A673 (cell line): ENCODE measurements at regions of chr1 and their contacts with region 1.

Region 1: DNA sequence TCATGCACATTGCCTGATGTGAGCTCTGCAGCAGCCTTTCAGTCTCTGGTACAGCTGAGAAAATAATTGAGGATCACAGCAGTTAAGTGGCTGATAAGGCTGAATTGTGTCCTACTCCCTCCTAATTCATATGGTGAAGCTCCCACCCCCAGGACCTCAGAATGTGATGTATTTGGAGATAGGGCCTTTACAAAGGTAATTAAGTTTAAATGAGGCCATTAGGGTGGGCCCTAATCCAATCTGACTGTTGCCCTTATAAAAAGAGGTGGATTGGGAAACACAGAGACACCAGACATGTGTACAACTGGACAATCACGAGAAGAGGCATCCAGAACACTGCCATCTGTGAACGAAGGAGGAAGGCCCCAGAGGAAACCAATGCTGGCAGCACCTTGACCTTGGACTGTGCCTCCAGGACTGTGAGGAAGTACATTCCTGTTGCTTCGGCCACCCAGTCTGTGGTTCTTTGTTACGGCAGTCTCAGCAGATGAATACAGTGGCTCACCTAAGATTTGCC is 148.1 kb downstream of the TRABD2B start:
- DNase-seq: no peak
- H3K4me3 ChIP-seq: no peak overlapping the region
- H3K27ac ChIP-seq: no peak overlapping the region
- H3K4me1 ChIP-seq: no peaks in the 10 kb centered on the region
- H3K27me3 ChIP-seq: peaks cover 4% of the 10 kb centered on the region
- CTCF ChIP-seq: no peak

Region 2: DNA sequence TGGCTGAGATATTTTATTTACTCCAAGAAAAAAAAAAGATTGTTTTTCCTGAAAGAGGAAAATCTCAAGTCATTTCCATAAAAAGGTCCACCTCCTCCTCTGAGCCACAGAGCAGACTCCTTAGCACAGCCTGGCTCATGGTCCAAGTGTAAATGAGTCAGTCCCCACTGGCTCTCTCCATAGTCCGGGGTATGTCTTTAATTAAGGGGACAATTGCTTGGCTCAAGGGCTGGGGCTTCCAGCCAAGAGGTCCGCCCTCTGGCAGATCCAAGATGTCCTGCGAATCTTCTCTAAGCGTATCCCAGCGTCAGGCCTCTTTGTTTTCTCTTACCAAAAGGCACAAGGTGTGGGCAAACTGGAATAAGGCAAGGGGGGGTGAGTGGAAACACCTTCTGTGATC is 377.9 kb before region 1 on chr1:
- CTCF ChIA-PET with region 1: no interaction called
- POLR2A ChIA-PET with region 1: no interaction called
- intact Hi-C with region 1: no loop called
- DNase-seq: no peak
- H3K4me3 ChIP-seq: no peak overlapping the region
- H3K27ac ChIP-seq: no peak overlapping the region
- H3K4me1 ChIP-seq: no peaks in the 10 kb centered on the region
- H3K27me3 ChIP-seq: peaks cover 35% of the 10 kb centered on the region
- CTCF ChIP-seq: no peak

Region 3: DNA sequence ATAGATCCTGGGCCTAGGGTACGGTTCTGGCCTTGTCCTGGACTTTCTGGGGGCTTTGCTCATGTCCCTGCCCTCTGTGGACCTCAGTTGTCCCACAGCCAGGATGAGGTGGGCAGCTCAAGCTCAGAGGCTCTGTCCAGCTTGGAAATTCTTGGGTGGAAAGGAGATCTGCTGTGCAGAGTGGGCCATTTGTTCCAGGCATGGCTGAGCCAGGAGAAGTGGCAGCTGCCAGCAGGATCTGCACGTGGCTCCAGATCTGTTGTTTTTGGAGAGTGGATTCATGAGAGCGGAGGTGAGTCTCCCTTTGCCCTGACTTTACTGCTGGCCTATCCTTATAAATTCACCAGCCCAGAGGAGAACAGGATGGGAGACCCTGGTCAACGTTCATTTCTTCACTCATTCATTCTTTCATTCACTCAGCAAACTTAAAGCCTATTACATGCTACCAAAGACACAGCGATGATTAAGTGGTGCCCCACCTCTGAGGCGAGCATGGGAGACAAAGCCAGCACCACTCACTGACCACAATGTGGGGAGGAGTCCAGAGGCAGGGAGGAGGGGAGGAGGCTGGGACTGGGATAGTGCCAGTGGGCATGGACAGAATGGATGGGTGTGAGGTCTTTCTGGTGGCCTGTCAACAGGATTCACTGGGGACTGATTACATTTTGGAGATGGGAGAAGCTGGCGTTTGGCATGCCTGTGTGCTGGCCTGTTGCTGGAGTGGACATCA is 57.0 kb before region 1 on chr1:
- CTCF ChIA-PET with region 1: no interaction called
- POLR2A ChIA-PET with region 1: no interaction called
- intact Hi-C with region 1: loop called (anchors 5 kb)
- DNase-seq: no peak
- H3K4me3 ChIP-seq: no peak overlapping the region
- H3K27ac ChIP-seq: no peak overlapping the region
- H3K4me1 ChIP-seq: no peaks in the 10 kb centered on the region
- H3K27me3 ChIP-seq: peaks cover 14% of the 10 kb centered on the region
- CTCF ChIP-seq: no peak

Region 4: DNA sequence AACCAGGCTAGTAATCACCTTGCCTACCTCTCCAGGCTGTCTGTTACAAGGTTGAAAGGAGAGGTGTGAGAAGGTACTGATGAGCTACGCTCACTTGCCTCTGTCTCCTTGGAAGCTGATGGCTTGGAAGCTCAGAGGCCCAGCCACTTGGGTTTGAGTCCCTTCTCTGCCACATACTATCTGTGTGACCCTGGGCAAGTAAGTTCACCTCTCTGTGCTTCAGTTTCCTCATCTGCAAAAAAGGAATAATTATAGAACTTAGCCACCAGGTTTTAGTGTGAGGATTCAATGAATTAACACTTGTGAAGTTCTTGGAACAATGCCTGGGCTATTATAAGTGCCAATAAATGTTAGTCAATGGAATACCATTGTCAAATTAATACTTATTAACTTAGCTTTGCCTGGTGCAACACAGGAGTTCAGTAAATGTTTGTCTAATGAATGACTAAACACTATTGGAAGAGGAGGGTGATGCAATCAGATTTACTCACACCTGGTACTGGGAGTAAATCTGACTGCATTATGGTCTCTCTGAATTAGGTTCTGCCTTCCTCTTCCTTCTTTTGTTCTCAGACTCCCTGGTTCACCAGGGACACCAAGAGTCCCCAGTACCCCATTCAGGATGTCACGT is 92.7 kb after region 1 on chr1:
- CTCF ChIA-PET with region 1: no interaction called
- POLR2A ChIA-PET with region 1: no interaction called
- intact Hi-C with region 1: no loop called
- DNase-seq: no peak
- H3K4me3 ChIP-seq: no peak overlapping the region
- H3K27ac ChIP-seq: no peak overlapping the region
- H3K4me1 ChIP-seq: no peaks in the 10 kb centered on the region
- H3K27me3 ChIP-seq: peaks cover 39% of the 10 kb centered on the region
- CTCF ChIP-seq: no peak